ENCODE measurements at regions of chr12 and their contacts with region 1.

Region 1: DNA sequence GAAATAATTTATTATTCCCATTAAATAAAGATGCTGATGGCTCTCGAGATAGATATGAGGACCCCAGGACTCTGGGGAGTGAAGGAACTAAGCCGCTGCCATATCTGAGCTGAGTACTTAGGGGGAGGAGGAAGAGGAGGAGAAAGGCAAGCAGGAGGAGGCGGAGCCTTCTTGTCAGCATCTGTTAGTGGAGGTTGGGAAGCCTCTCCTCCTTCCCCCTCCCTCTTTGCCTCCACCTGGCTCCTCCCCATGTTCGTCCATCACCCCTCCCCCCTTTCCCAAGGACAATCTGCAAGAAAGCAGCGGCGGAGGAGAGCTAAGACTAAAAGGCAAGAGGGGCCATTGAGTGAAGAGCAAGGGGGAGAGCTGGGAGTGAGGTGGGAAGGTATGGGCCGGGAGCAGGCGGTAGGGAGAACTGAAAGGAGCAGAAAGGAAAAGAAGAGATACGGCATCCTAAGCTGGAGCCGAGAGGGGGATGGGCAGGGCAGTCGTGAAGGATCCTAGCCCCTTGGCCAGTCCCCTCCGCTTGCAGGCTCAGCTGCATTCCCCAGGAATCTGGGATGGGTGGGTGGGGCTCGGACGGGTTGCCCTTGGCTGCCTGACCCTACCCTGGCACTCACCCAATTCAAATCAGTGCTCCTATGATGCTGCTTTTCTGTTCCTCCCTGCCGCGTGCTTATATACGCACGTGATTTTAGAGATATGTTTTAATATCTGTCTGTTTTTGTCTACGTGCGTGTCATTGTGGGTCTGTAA is at the start of gene PFKM:
- DNase-seq: peak; percentile 87
- H3K4me3 ChIP-seq: peak within 1 kb of the TSS; percentile 86
- H3K27ac ChIP-seq: peak within 1 kb of the TSS; percentile 40
- H3K4me1 ChIP-seq: peaks cover 21% of the 10 kb centered on the region
- CTCF ChIP-seq: no peak
- total RNA-seq, gene PFKM: 37.4 and 42.3 TPM in 2 replicates

Region 2: GRCh38 chr12:48105862-48106680 is 13.2 kb before region 1 on chr12 and contains the start of gene SENP1:
- CTCF ChIA-PET with region 1: interaction called, 4 read pairs
- POLR2A ChIA-PET with region 1: interaction called, 62 read pairs
- intact Hi-C with region 1: loop called (anchors 1 kb)
- DNase-seq: peak; percentile 92
- H3K4me3 ChIP-seq: peak within 1 kb of the TSS; percentile 96
- H3K27ac ChIP-seq: peak within 1 kb of the TSS; percentile 94
- H3K4me1 ChIP-seq: peaks cover 40% of the 10 kb centered on the region
- CTCF ChIP-seq: no peak; the same call in 1 of the 2 replicates
- total RNA-seq, gene SENP1: 29.9 and 48.3 TPM in 2 replicates

Region 3: GRCh38 chr12:48145981-48146380 is 26.7 kb after region 1 on chr12:
- CTCF ChIA-PET with region 1: no interaction called
- POLR2A ChIA-PET with region 1: no interaction called
- intact Hi-C with region 1: loop called (anchors 2 kb)
- DNase-seq: no peak
- H3K4me3 ChIP-seq: no peak overlapping the region
- H3K27ac ChIP-seq: no peak overlapping the region
- H3K4me1 ChIP-seq: no peaks in the 10 kb centered on the region
- CTCF ChIP-seq: no peak

Measured in OCI-LY7 (cell line).